Activated CD8-positive, alpha-beta memory T cell treated with anti-CD3 and anti-CD28 coated beads, Interleukin-2, amount 10 ng/mL, durations not matched to agents 7 days and 5 days (primary cell): ENCODE measurements at regions of chr9 and their contacts with region 1.

Region 1: DNA sequence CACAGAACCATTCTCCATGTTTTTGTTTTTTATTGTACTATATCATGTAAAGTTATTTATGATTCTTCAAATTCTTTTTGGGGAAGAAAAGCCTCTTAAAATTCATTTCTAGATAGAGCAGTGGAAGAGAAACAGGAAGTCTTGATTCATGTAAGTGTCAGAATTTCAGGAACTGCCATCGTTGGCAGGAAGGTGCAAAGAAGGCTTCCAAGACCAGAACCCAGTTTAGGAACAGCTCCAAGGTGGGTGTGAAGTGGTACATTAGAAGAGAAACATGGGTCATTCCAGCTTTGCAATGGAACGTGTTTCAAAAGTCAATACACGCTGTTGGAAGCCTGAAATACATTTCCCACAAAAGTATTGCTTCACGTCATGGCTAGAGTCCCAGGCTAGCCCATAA is 14.8 kb downstream of the SAXO1 start:
- DNase-seq: no peak
- ATAC-seq: no peak
- H3K4me3 Mint-ChIP-seq: no peak overlapping the region
- H3K27ac Mint-ChIP-seq: no peak overlapping the region
- H3K4me1 Mint-ChIP-seq: no peaks in the 10 kb centered on the region
- H3K27me3 Mint-ChIP-seq: peaks cover under 1% of the 10 kb centered on the region

Region 2: DNA sequence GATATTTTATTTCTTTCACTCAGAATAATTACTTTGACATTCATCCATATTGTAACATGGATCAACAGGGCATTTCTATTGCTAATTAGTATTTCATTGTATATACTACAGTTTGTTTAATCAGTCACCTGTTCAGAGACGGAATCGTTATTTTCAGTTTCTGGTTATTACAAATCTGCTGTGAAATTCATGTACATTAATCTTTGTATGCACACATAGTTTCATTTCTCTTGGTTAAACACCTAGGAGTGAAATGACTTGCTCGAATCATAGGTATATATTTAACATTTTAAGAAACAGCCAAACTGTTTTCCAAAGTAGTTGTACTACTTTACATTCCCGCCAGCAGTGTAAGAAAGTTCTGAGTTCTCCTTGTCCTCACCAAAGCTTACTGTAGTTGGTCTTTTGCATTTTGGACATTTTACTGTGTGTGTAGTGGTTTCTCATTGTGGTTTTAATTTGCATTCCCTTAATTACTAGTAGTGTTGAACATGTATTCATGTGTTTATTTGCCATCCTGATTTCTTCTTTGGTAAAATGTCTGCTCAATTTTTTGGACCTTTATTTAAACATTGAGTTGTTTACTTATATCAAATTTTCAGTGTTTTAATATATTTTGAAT is 183.3 kb before region 1 on chr9:
- CTCF ChIA-PET with region 1: no interaction called
- DNase-seq: no peak
- ATAC-seq: no peak
- H3K4me3 Mint-ChIP-seq: no peak overlapping the region
- H3K27ac Mint-ChIP-seq: no peak overlapping the region
- H3K4me1 Mint-ChIP-seq: peaks cover 2% of the 10 kb centered on the region
- H3K27me3 Mint-ChIP-seq: peaks cover 3% of the 10 kb centered on the region

Region 3: GRCh38 chr9:19028835-19029451 is 10.7 kb after region 1 on chr9:
- CTCF ChIA-PET with region 1: interaction called, 12 read pairs
- DNase-seq: no peak
- ATAC-seq: no peak
- H3K4me3 Mint-ChIP-seq: no peak overlapping the region
- H3K27ac Mint-ChIP-seq: no peak overlapping the region
- H3K4me1 Mint-ChIP-seq: peaks cover 14% of the 10 kb centered on the region
- H3K27me3 Mint-ChIP-seq: peaks cover 20% of the 10 kb centered on the region